ENCODE measurements at regions of chr20 and their contacts with region 1.

Region 1: DNA sequence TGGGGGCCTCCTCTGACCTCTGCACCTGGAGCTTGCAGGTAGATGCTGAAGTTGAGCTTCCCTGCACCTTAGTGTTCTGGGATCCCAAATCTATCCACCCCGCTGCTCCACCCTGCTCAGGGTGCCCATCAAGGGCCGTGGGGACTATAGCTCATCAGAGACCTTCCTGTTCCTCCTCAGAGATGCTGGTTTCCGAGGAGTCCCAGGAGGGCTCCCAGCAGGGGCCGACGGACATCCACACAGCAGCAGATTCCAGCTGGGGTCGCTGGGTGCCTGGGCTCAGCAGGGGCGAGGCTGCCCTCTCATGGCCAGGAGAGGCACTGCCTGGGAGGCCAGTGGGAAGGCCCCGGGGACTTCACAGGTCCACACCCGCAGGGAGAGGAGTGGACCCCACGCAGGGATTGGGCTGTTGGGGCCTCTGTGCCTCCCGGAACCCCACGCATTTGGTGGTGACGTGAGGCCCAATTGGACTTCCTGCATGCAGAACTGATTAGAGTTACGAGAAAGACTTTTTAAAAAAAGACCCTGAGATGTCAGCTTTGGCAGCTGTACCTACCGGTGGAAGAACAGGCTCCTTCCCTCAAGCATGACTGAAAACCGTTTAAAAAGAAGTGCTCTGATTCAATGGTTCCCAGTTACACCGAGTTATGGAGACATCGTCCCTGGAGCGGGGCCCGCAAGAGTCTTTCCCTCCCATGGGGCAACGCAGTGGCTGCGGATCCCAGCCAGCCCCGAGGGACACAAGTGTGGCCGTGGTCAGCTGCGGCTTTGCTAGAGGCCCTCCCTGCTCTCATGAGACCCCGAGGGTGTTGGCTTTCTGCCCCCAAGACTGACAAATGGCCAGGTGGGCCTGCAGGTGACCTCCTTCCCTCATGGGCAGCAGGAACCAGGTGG is 25.3 kb upstream of the SLCO4A1 start:
- DNase-seq: peak; percentile 71 to 85
- ATAC-seq: peak; percentile 92 to 99
- H3K4me3 ChIP-seq: no peak overlapping the region
- H3K27ac ChIP-seq: no peak overlapping the region
- H3K4me1 ChIP-seq: peaks cover 16% of the 10 kb centered on the region; the same call in 2 of the 3 replicates
- CTCF ChIP-seq: peak; percentile 87
- EP300 ChIP-seq: no peak
- POLR2A ChIP-seq: no peak
- RAD21 ChIP-seq: peak; percentile 93

Region 2: GRCh38 chr20:62494980-62495748 is 121.8 kb before region 1 on chr20:
- CTCF ChIA-PET with region 1: interaction called, 29 read pairs
- POLR2A ChIA-PET with region 1: no interaction called
- DNase-seq: no peak
- ATAC-seq: no peak
- H3K4me3 ChIP-seq: no peak overlapping the region
- H3K27ac ChIP-seq: no peak overlapping the region
- H3K4me1 ChIP-seq: peaks cover 7% of the 10 kb centered on the region
- CTCF ChIP-seq: no peak
- EP300 ChIP-seq: no peak
- POLR2A ChIP-seq: no peak
- RAD21 ChIP-seq: no peak

Region 3: DNA sequence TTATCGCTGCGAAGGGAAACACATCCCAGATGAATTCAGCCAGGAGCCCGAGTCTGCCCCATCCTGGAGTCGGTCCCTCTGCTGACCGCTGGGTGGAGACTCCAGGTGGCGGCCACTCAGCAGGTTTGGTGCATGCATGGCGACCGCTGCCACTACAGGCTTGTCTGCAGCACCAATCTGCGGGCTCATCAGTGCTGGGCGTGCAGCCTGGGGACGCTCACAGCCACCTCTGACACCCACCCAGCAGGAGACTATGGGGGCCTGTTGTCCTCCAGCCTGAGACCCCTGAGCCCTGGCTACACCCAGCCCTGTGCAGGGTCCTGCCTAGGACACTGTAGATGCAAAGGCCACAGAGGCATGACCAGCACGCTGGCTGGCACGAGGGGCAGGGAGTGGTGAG is 100.6 kb before region 1 on chr20:
- CTCF ChIA-PET with region 1: interaction called, 63 read pairs
- POLR2A ChIA-PET with region 1: no interaction called
- DNase-seq: peak; percentile 64 to 76
- ATAC-seq: peak; percentile 86 to 93
- H3K4me3 ChIP-seq: no peak overlapping the region
- H3K27ac ChIP-seq: no peak overlapping the region
- H3K4me1 ChIP-seq: no peaks in the 10 kb centered on the region
- CTCF ChIP-seq: peak; percentile 55
- EP300 ChIP-seq: no peak
- POLR2A ChIP-seq: no peak
- RAD21 ChIP-seq: peak; percentile 55 to 60

Region 4: DNA sequence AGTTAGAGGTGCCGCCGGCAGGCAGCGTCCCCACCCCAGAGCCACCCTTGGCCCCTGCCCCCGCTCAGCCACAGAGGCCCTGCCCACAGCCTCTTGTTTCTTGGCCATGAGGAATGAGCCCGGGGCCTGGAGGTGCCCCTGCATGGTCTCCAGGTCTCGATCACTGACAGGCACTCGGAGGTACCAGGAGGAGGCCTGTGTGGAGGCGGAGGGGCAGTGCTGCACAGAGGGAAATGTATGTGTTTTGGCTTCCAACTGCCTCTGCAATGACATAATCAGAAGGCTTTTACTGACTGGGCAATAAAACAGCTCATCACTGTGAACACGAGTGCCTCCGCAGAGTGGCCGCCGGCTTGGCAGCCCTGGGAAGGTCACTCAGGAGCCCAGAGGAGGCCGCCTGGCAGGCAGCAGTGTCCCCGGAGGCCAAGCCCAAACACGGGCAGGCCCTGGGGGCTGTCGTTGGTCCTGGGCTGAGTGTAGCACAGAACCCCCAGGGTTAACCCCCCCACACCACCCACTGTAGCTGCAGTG is 80.0 kb before region 1 on chr20:
- CTCF ChIA-PET with region 1: interaction called, 26 read pairs
- POLR2A ChIA-PET with region 1: no interaction called
- DNase-seq: no peak
- ATAC-seq: no peak
- H3K4me3 ChIP-seq: no peak overlapping the region
- H3K27ac ChIP-seq: no peak overlapping the region
- H3K4me1 ChIP-seq: no peaks in the 10 kb centered on the region
- CTCF ChIP-seq: no peak
- EP300 ChIP-seq: no peak
- POLR2A ChIP-seq: no peak
- RAD21 ChIP-seq: no peak

Region 5: GRCh38 chr20:62587757-62588402 is 29.1 kb before region 1 on chr20:
- CTCF ChIA-PET with region 1: interaction called, 25 read pairs
- POLR2A ChIA-PET with region 1: no interaction called
- DNase-seq: no peak
- ATAC-seq: no peak
- H3K4me3 ChIP-seq: no peak overlapping the region
- H3K27ac ChIP-seq: no peak overlapping the region
- H3K4me1 ChIP-seq: peaks cover 9% of the 10 kb centered on the region; the same call in 2 of the 3 replicates
- CTCF ChIP-seq: no peak
- EP300 ChIP-seq: no peak
- POLR2A ChIP-seq: no peak
- RAD21 ChIP-seq: no peak

Region 6: GRCh38 chr20:62632575-62633090 is 15.7 kb after region 1 on chr20:
- CTCF ChIA-PET with region 1: interaction called, 24 read pairs
- POLR2A ChIA-PET with region 1: no interaction called
- DNase-seq: no peak
- ATAC-seq: no peak
- H3K4me3 ChIP-seq: no peak overlapping the region
- H3K27ac ChIP-seq: no peak overlapping the region
- H3K4me1 ChIP-seq: peaks cover 8% of the 10 kb centered on the region; the same call in 2 of the 3 replicates
- CTCF ChIP-seq: no peak
- EP300 ChIP-seq: no peak
- POLR2A ChIP-seq: no peak
- RAD21 ChIP-seq: no peak